Natural killer cell (primary cell): ENCODE measurements at regions of chr11 and their contacts with region 1.

Region 1: DNA sequence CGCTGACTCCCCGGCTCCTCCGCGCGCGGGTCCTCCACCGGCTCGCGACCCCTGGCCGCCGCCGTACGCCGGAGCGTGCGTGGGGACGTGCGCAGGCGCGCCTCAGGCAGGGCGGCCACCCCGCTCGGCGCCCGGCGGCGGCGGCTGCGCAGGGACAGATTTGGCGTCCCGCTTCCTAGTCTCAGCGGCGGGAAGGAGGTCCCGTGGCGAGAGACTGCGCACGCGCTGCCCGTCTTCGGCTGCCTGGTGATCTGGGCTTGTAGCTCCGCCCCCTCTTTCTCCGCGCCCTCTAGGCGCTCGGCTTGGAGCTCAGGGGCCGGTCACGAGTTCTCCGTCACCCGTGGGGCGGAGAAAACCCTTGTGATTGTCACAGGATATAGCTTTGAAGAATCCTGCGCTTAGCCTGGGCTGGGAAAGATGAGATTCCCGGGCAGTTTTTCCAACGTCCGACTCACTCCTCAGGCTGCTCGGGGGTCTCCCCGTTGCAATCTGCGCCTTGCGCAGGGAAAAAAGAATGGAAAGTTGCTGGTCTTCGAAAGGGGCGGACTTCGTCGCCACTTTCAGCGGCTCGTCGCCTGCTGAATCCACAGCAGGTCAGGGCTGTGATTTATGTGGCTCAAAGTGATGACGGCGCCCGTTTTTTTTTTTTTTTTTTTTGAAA is at the start of gene PATL1:
- DNase-seq: peak; percentile 98 to 100
- ATAC-seq: peak; percentile 82 to 96 (median 84)
- H3K4me3 ChIP-seq: peak within 1 kb of the TSS; percentile 94
- H3K4me3 Mint-ChIP-seq: peak within 1 kb of the TSS; percentile 94
- H3K27ac ChIP-seq: peak within 1 kb of the TSS; percentile 99
- H3K27ac Mint-ChIP-seq: peak within 1 kb of the TSS; percentile 98 to 100
- H3K4me1 ChIP-seq: peaks cover 18% of the 10 kb centered on the region
- H3K4me1 Mint-ChIP-seq: peaks cover 29 to 35% of the 10 kb centered on the region in 2 donors
- H3K27me3 ChIP-seq: no peaks in the 10 kb centered on the region
- H3K27me3 Mint-ChIP-seq: no peaks in the 10 kb centered on the region
- CTCF ChIP-seq: no peak
- total RNA-seq, gene PATL1: 56.8 to 69.4 (median 58.1) TPM

Region 2: DNA sequence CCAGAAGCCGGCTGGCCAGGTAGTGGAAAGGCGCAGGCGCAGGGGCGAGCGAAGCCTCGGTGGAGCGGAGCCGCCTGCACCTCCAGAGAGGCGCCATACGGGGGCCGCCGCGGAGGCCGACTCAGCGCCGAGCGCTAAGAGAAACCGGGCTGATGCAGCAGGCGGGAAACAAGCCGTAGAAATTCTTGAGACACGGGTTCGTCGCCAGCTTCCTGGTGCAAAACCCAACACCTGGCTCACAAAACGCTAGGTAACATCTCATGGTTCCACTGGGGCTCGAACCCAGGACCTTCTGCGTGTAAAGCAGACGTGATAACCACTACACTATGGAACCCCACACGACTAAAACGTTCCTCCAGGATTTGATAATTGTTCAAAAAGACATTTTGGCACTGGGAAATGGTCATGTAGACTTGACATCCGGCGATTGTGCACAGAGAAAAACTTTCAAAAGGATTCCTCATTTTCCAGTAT is 118.7 kb before region 1 on chr11:
- intact Hi-C with region 1: loop called (anchors 2 kb)
- DNase-seq: peak; percentile 72 to 92
- ATAC-seq: peak; percentile 80 to 89 (median 87)
- H3K4me3 ChIP-seq: peak overlapping the region; percentile 59
- H3K4me3 Mint-ChIP-seq: peak overlapping the region; percentile 99
- H3K27ac ChIP-seq: peak overlapping the region; percentile 49
- H3K27ac Mint-ChIP-seq: peak overlapping the region; percentile 98 to 100
- H3K4me1 ChIP-seq: peaks cover 12% of the 10 kb centered on the region
- H3K4me1 Mint-ChIP-seq: peaks cover 17 to 23% of the 10 kb centered on the region in 2 donors
- H3K27me3 ChIP-seq: no peaks in the 10 kb centered on the region
- H3K27me3 Mint-ChIP-seq: peaks cover 3 to 18% of the 10 kb centered on the region in 2 donors
- CTCF ChIP-seq: peak; percentile 44

Region 3: GRCh38 chr11:59615637-59616395 is 53.3 kb before region 1 on chr11 and contains the start of gene OSBP:
- intact Hi-C with region 1: loop called (anchors 1 kb)
- DNase-seq: peak; percentile 97 to 100
- ATAC-seq: peak; percentile 76 to 90 (median 78)
- H3K4me3 ChIP-seq: peak within 1 kb of the TSS; percentile 94
- H3K4me3 Mint-ChIP-seq: peak within 1 kb of the TSS; percentile 95
- H3K27ac ChIP-seq: peak within 1 kb of the TSS; percentile 87
- H3K27ac Mint-ChIP-seq: peak within 1 kb of the TSS; percentile 83 to 95
- H3K4me1 ChIP-seq: peaks cover 15% of the 10 kb centered on the region
- H3K4me1 Mint-ChIP-seq: peaks cover 51% of the 10 kb centered on the region in 2 donors
- H3K27me3 ChIP-seq: no peaks in the 10 kb centered on the region
- H3K27me3 Mint-ChIP-seq: no peaks in the 10 kb centered on the region
- CTCF ChIP-seq: no peak
- total RNA-seq, gene OSBP: 40.5 to 58.5 (median 51.3) TPM

Region 4: GRCh38 chr11:59767225-59767611 is 98.1 kb after region 1 on chr11:
- intact Hi-C with region 1: no loop called
- DNase-seq: peak in 1 of 2 donors; percentile 52
- ATAC-seq: peak; percentile 52 to 75 (median 72)
- H3K4me3 ChIP-seq: no peak overlapping the region
- H3K4me3 Mint-ChIP-seq: peak overlapping the region; percentile 63
- H3K27ac ChIP-seq: no peak overlapping the region
- H3K27ac Mint-ChIP-seq: peak overlapping the region in 1 of 2 donors; percentile 50
- H3K4me1 ChIP-seq: peaks cover 40% of the 10 kb centered on the region
- H3K4me1 Mint-ChIP-seq: peaks cover 11 to 30% of the 10 kb centered on the region in 2 donors
- H3K27me3 ChIP-seq: no peaks in the 10 kb centered on the region
- H3K27me3 Mint-ChIP-seq: peaks cover 0 to 5% of the 10 kb centered on the region in 2 donors
- CTCF ChIP-seq: no peak

Region 5: DNA sequence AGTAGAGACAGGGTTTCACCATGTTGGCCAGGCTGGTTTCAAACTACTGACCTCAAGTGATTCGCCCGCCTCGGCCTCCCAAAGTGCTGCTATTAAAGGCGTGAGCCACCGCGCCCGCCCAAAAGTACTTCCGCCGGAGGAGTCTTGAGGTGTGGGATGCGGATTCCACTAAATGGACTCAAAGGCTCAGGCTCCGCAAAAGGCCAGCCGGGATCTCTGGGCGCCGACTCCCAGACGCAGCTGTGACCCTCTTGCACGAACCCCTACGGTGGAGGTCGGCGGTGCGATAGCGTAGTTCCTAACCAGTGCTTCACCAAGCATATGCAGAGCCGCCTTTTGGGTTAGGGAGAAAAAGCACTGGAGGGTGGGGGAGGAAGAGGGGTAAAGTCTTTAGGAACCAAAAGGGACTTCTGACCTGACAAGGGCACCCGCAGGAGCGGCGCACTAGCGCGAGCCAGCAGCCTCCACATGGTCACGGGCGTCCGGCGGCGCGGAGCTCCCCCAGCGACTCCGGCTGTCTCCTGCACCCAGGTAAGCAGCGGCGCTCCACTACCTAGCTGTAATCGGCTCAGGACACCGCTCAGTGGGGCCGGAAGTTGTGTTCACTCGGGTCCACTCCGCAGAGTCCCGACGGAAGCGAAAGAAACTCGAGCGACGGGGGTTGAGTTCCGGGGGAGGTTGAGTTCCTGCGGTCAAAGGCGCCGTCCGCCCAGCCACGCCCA is 141.3 kb after region 1 on chr11 and contains the start of gene MRPL16:
- intact Hi-C with region 1: loop called (anchors 2 kb)
- DNase-seq: peak; percentile 79 to 95
- ATAC-seq: peak; percentile 97 to 99 (median 98)
- H3K4me3 ChIP-seq: peak within 1 kb of the TSS; percentile 59
- H3K4me3 Mint-ChIP-seq: peak within 1 kb of the TSS; percentile 91
- H3K27ac ChIP-seq: peak within 1 kb of the TSS; percentile 69
- H3K27ac Mint-ChIP-seq: peak within 1 kb of the TSS; percentile 81 to 90
- H3K4me1 ChIP-seq: peaks cover 13% of the 10 kb centered on the region
- H3K4me1 Mint-ChIP-seq: peaks cover 12 to 24% of the 10 kb centered on the region in 2 donors
- H3K27me3 ChIP-seq: no peaks in the 10 kb centered on the region
- H3K27me3 Mint-ChIP-seq: peaks cover 0 to 2% of the 10 kb centered on the region in 2 donors
- CTCF ChIP-seq: no peak
- total RNA-seq, gene MRPL16: 34.9 to 38.0 (median 37.5) TPM